ENCODE measurements at regions of chr19 and their contacts with region 1.

Region 1: DNA sequence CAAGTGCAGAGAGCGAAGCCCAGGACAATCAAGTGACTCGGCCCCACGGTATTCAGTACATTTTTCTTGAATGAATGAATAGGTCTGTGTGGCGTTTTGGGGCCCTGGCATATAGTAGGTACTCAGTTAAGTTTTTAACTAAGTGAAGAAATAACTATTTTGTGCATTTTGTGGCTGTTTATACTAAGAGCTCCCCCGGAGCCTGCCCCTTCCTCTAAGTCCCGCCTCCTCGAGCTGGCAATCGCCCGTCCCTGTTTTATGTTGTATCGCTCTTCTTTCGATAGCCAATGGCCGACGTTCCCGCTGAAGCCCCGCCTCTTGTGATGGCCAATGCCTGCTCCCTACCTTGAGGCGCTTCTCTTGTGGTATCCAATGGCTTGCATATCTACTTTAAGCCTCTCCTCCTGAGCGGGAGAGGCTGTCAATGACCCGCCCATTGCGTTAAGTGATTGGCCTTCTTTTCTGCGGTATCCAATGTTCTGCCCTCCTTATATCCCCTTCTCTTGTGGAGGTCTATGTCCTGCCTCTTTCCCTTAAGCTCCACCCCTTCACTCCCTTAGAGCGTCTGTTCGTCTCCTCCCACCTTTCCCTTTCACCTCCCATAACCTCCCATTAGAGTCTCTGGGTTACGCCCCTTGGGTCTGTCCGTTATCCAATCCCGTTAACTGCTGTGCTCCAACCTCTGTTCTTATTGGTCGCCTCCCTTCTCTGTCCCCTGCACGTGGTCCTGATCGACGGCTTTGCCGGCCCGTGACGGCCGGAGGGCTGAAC is 509 bp upstream of the HDGFL2 start:
- DNase-seq: peak; percentile 100
- ATAC-seq: peak; percentile 85
- H3K4me3 ChIP-seq: peak overlapping the region; percentile 76 to 98 (median 85)
- H3K4me3 Mint-ChIP-seq: no peak overlapping the region
- H3K27ac ChIP-seq: peak overlapping the region; percentile 68 to 74
- H3K27ac Mint-ChIP-seq: no peak overlapping the region
- H3K4me1 ChIP-seq: peaks cover 20 to 31% of the 10 kb centered on the region in 2 donors
- H3K4me1 Mint-ChIP-seq: peaks cover 22% of the 10 kb centered on the region
- H3K27me3 ChIP-seq: no peaks in the 10 kb centered on the region
- H3K27me3 Mint-ChIP-seq: no peaks in the 10 kb centered on the region
- CTCF ChIP-seq: no peak

Region 2: DNA sequence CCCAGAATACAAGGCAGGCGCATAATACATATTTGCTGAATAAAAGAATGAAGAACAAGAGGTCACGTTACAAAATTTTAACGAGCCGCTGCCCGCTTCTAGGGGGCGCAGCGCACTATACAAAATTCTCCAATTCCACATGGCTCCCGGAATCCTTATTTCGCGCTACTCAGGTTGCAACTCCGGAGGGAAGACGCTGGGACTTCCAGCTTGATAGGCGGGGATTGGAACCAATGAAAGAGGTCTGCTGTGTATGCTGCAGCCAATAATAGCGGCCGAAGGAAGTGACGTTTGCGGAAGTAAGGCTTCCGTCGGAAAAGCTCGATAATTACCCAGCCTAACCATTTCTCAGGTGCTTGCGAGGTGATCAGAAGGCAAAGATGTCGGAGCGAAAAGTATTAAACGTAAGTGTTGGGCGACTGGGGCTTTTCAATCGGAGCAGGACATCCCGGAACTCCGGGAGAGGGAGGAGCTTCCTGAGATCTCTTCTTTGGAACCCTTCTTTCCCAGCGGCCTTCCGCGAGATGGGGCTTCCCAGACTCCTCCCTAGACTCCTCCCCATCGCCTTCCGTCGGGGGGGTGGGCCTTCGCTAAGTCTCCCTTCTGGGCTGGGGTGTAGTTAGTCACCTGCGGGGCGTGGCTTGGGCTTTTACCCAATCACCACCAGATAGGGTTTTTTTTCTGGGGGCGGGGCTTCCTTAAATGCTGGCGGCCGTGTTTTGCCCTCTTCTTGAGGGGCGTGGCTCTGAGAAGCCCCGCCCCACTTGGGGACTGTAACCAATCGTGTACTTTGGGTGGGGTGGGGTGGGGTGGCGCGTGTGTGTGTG is 224.6 kb before region 1 on chr19 and contains the start of gene YJU2:
- CTCF ChIA-PET with region 1: interaction called, 4 read pairs
- POLR2A ChIA-PET with region 1: no interaction called
- intact Hi-C with region 1: loop called (anchors 1 kb)
- DNase-seq: peak; percentile 99
- ATAC-seq: peak; percentile 94
- H3K4me3 ChIP-seq: peak within 1 kb of the TSS; percentile 86 to 99 (median 98)
- H3K4me3 Mint-ChIP-seq: peak within 1 kb of the TSS; percentile 91
- H3K27ac ChIP-seq: peak within 1 kb of the TSS; percentile 99 to 100
- H3K27ac Mint-ChIP-seq: peak within 1 kb of the TSS; percentile 95
- H3K4me1 ChIP-seq: peaks cover 12 to 24% of the 10 kb centered on the region in 2 donors
- H3K4me1 Mint-ChIP-seq: peaks cover 23% of the 10 kb centered on the region
- H3K27me3 ChIP-seq: no peaks in the 10 kb centered on the region
- H3K27me3 Mint-ChIP-seq: no peaks in the 10 kb centered on the region
- CTCF ChIP-seq: peak; percentile 40
- total RNA-seq, gene YJU2: 39.8 and 40.3 TPM in 2 replicates

Region 3: GRCh38 chr19:4342615-4343369 is 128.8 kb before region 1 on chr19:
- CTCF ChIA-PET with region 1: no interaction called
- POLR2A ChIA-PET with region 1: interaction called, 11 read pairs
- intact Hi-C with region 1: loop called (anchors 1 kb)
- DNase-seq: peak; percentile 97
- ATAC-seq: peak; percentile 85
- H3K4me3 ChIP-seq: peak overlapping the region; percentile 63 to 89 (median 81)
- H3K4me3 Mint-ChIP-seq: peak overlapping the region; percentile 90
- H3K27ac ChIP-seq: peak overlapping the region; percentile 64 to 82
- H3K27ac Mint-ChIP-seq: peak overlapping the region; percentile 69
- H3K4me1 ChIP-seq: peaks cover 10 to 32% of the 10 kb centered on the region in 2 donors
- H3K4me1 Mint-ChIP-seq: peaks cover 27% of the 10 kb centered on the region
- H3K27me3 ChIP-seq: no peaks in the 10 kb centered on the region
- H3K27me3 Mint-ChIP-seq: no peaks in the 10 kb centered on the region
- CTCF ChIP-seq: no peak

Region 4: DNA sequence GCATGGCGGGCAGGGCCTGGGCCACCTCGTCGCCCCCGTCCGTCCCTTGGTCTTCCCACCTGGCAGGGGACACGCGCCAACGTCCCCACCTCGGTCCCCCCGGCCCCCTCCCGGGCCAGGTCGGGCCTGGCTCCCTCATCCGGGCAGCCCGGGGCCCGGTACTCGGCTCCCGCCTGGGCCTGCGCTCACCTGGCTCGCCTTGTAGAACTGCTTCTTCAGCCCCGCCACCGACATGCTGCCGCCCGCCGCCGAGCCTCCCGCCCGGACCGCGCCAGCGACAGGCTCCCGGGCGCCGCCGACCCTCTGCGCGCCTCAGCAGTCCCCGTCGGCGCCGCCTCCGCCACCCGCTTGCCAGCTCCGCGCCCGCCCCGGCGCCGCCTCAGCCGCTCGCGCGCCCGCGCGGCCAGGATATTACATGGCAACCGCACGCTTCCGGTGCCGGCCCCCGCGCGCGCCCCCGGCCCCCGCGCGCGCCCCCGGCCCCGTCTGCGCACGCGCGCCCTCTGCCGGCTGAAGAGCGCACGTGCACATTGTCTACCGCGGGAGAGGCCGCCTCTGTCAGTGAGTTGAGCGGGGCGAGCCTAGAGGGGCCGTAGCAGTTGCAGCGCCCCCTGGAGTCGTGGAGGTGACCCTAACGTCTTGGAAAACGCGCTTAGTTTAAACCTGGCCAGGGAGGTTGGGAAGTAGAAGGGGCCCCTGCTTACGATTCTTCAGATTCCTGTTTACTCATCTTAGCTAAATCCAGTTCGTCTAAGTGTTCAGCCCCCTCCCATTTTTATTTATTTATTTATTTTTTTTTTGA is 71.3 kb before region 1 on chr19 and contains the start of gene SH3GL1:
- CTCF ChIA-PET with region 1: interaction called, 5 read pairs
- POLR2A ChIA-PET with region 1: interaction called, 6 read pairs
- intact Hi-C with region 1: loop called (anchors 1 kb)
- DNase-seq: peak; percentile 96
- ATAC-seq: peak; percentile 68
- H3K4me3 ChIP-seq: peak within 1 kb of the TSS; percentile 85 to 99 (median 88)
- H3K4me3 Mint-ChIP-seq: peak within 1 kb of the TSS; percentile 85
- H3K27ac ChIP-seq: peak within 1 kb of the TSS; percentile 49 to 97
- H3K27ac Mint-ChIP-seq: peak within 1 kb of the TSS; percentile 88
- H3K4me1 ChIP-seq: peaks cover 29 to 44% of the 10 kb centered on the region in 2 donors
- H3K4me1 Mint-ChIP-seq: peaks cover 53% of the 10 kb centered on the region
- H3K27me3 ChIP-seq: no peaks in the 10 kb centered on the region
- H3K27me3 Mint-ChIP-seq: no peaks in the 10 kb centered on the region
- CTCF ChIP-seq: peak; percentile 77
- total RNA-seq, gene SH3GL1: 37.2 and 41.9 TPM in 2 replicates

Region 5: GRCh38 chr19:4654437-4655361 is 183.1 kb after region 1 on chr19:
- CTCF ChIA-PET with region 1: no interaction called
- POLR2A ChIA-PET with region 1: no interaction called
- intact Hi-C with region 1: no loop called
- DNase-seq: no peak
- ATAC-seq: no peak
- H3K4me3 ChIP-seq: no peak overlapping the region
- H3K4me3 Mint-ChIP-seq: no peak overlapping the region
- H3K27ac ChIP-seq: no peak overlapping the region
- H3K27ac Mint-ChIP-seq: peak overlapping the region; percentile 44
- H3K4me1 ChIP-seq: no peaks in the 10 kb centered on the region
- H3K4me1 Mint-ChIP-seq: peaks cover 6% of the 10 kb centered on the region
- H3K27me3 ChIP-seq: no peaks in the 10 kb centered on the region
- H3K27me3 Mint-ChIP-seq: no peaks in the 10 kb centered on the region
- CTCF ChIP-seq: no peak

Region 6: GRCh38 chr19:4669723-4670480 is 198.3 kb after region 1 on chr19 and contains the start of gene MYDGF:
- CTCF ChIA-PET with region 1: no interaction called
- POLR2A ChIA-PET with region 1: no interaction called
- intact Hi-C with region 1: loop called (anchors 1 kb)
- DNase-seq: peak; percentile 93
- ATAC-seq: peak; percentile 98
- H3K4me3 ChIP-seq: peak within 1 kb of the TSS; percentile 33 to 84 (median 79)
- H3K4me3 Mint-ChIP-seq: peak within 1 kb of the TSS; percentile 88
- H3K27ac ChIP-seq: peak within 1 kb of the TSS; percentile 6 to 87
- H3K27ac Mint-ChIP-seq: peak within 1 kb of the TSS; percentile 78
- H3K4me1 ChIP-seq: peaks cover 10 to 18% of the 10 kb centered on the region in 2 donors
- H3K4me1 Mint-ChIP-seq: peaks cover 20% of the 10 kb centered on the region
- H3K27me3 ChIP-seq: no peaks in the 10 kb centered on the region
- H3K27me3 Mint-ChIP-seq: no peaks in the 10 kb centered on the region
- CTCF ChIP-seq: no peak
- total RNA-seq, gene MYDGF: 18.1 and 21.2 TPM in 2 replicates

Region 7: DNA sequence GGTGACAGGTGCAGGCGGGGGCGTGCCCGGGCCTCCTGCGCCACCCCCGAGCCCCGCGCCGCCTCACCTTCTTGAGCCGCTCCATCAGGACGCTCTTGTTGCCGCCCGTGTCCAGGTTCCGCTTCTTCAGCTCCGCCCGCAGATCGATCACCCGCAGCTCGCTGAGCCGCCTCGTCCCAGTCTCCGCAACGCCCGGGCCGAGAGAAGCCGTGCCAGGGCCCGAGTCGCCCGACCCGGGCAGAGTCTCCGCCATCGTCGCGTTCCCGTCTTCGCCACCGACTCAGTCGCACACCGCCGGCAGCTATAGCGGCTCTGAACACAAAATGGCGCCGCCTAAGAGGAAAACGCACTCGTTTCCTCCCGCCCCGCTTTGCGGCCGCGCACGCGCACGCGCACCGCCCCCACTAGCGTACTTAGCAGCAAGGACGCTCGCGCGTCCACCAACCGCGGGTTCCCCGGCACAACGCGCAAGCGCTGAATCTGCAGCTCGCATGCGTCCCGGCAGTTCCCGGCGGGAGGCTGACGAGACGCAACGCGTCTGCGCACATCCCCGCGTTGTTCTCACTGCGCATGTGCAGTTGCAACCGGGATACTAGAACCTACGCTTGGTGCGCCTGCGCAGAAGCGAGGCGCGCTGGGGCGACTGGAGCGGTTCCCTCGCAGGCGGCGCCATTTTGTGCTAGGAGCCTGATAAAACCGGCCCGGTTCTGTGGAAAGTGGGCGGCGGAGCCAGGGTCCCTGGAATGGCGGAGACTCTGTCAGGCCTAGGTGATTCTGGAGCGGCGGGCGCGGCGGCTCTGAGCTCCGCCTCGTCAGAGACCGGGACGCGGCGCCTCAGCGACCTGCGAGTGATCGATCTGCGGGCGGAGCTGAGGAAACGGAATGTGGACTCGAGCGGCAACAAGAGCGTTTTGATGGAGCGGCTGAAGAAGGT is 1151.1 kb after region 1 on chr19 and contains the starts of genes SAFB and SAFB2:
- CTCF ChIA-PET with region 1: no interaction called
- POLR2A ChIA-PET with region 1: no interaction called
- intact Hi-C with region 1: loop called (anchors 10 kb)
- DNase-seq: peak; percentile 100
- ATAC-seq: peak; percentile 81
- H3K4me3 ChIP-seq: peak within 1 kb of the TSS; percentile 94 to 98 (median 98)
- H3K4me3 Mint-ChIP-seq: peak within 1 kb of the TSS; percentile 99
- H3K27ac ChIP-seq: peak within 1 kb of the TSS; percentile 92 to 95
- H3K27ac Mint-ChIP-seq: peak within 1 kb of the TSS; percentile 98
- H3K4me1 ChIP-seq: peaks cover 60 to 68% of the 10 kb centered on the region in 2 donors
- H3K4me1 Mint-ChIP-seq: peaks cover 74% of the 10 kb centered on the region
- H3K27me3 ChIP-seq: no peaks in the 10 kb centered on the region
- H3K27me3 Mint-ChIP-seq: no peaks in the 10 kb centered on the region
- CTCF ChIP-seq: no peak
- total RNA-seq, gene SAFB: 221 and 237 TPM in 2 replicates
- total RNA-seq, gene SAFB2: 242 and 257 TPM in 2 replicates

Measured in B cell (primary cell).